ENCODE measurements at regions of chr12 and their contacts with region 1.

Region 1: GRCh38 chr12:13100882-13101769 is 2.3 kb downstream of the GSG1 start:
- DNase-seq: peak; percentile 82 to 94 (median 86)
- H3K4me3 ChIP-seq: peak overlapping the region in 2 of 4 donors; percentile 41 to 74
- H3K27ac ChIP-seq: peak overlapping the region; percentile 1 to 98 (median 80)
- H3K4me1 ChIP-seq: peaks cover 18 to 54% of the 10 kb centered on the region in 2 donors
- H3K27me3 ChIP-seq: no peaks in the 10 kb centered on the region
- CTCF ChIP-seq: peak in 1 of 6 experiments; percentile 2
- POLR2A ChIP-seq: peak; percentile 9 to 10

Region 2: DNA sequence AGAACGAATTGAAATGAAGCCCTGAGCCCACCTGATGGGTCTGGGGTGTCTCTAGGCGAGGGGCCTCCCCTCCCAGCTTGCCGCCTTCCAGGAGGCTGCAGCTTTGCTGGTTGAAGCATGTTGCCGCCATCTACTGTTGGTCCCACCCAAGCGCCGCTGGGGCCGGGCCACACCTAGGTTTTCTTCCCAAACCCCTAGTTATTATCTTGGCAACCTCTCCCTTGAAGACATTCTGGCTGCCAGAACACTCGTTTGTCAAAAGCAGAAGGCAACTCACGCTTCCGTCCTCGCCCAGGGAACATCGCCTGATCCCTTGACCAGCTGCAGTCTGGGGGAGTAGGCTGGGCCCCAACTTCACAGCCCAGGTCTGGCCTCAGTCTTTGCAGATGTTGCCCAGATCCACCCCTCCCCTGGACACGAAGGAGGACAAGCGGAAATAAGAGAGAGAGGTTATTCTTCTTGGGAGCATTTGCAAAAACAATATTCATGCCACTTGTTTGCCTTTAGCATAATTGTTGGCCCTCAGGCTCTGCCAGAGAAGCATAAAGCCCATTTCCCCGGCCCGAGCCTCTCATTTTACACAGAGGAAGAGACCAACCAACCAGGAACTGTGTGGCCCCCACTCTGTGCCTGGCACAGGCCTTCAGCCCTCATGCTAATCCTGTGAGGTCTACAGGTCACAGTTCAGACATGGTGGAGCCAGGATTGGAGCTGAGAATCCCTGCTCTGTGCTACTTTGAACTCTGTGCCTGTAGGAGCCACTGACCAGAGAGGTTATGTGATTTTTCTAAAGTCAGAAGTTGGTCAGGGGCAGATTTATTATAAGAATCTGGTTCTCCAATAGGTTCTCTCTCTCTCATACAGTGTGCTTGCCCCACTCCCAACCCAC is 102.2 kb after region 1 on chr12:
- intact Hi-C with region 1: loop called (anchors 5 kb)
- DNase-seq: peak in 3 of 7 donors; percentile 8 to 35 (median 22)
- H3K4me3 ChIP-seq: no peak overlapping the region
- H3K27ac ChIP-seq: peak overlapping the region in 2 of 5 donors; percentile 29 to 60
- H3K4me1 ChIP-seq: peaks cover 0 to 13% of the 10 kb centered on the region in 2 donors
- H3K27me3 ChIP-seq: no peaks in the 10 kb centered on the region
- CTCF ChIP-seq: peak in 1 of 6 experiments; percentile 8
- POLR2A ChIP-seq: no peak

Region 3: GRCh38 chr12:13211859-13212664 is 110.9 kb after region 1 on chr12:
- intact Hi-C with region 1: loop called in 1 of 2 experiments (anchors 5 kb)
- DNase-seq: peak; percentile 60 to 89 (median 71)
- H3K4me3 ChIP-seq: no peak overlapping the region
- H3K27ac ChIP-seq: no peak overlapping the region
- H3K4me1 ChIP-seq: peaks cover 0 to 39% of the 10 kb centered on the region in 2 donors
- H3K27me3 ChIP-seq: no peaks in the 10 kb centered on the region
- CTCF ChIP-seq: peak; percentile 70 to 87 (median 77)
- POLR2A ChIP-seq: no peak

Measured in adrenal gland (tissue), 19 donors.